ENCODE measurements at regions of chr3 and their contacts with region 1.

Region 1: GRCh38 chr3:197186887-197187588 is 111.4 kb downstream of the DLG1 start:
- DNase-seq: no peak
- H3K4me3 ChIP-seq: no peak overlapping the region
- CTCF ChIP-seq: peak; percentile 65

Region 2: DNA sequence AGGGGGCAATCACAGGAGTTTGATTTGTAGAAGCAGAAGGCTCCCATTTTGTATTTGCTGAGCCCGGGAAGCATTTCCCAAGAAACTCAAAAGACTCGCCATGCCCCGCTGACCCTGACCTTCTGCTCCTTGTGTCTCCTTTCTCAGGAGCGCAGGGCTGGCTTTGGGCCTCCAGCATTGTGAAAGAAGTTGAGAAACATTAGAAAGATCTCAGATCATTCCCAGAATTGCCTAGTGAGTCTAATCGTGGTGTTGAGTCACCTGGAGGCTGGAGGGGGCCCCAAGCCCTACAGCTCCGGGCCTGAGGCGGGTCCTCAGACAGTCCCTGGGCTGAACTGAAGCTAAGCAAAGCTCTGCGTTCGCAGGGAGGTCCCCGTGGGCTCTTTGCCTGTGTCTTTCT is 207.5 kb before region 1 on chr3:
- CTCF ChIA-PET with region 1: interaction called, 16 read pairs
- POLR2A ChIA-PET with region 1: no interaction called
- DNase-seq: peak; percentile 17
- H3K4me3 ChIP-seq: no peak overlapping the region
- CTCF ChIP-seq: no peak

Region 3: GRCh38 chr3:197002701-197003454 is 184.2 kb before region 1 on chr3:
- CTCF ChIA-PET with region 1: interaction called, 13 read pairs
- POLR2A ChIA-PET with region 1: no interaction called
- DNase-seq: no peak
- H3K4me3 ChIP-seq: peak overlapping the region; percentile 62
- CTCF ChIP-seq: peak; percentile 82

Region 4: GRCh38 chr3:197168606-197169005 is 18.4 kb before region 1 on chr3:
- CTCF ChIA-PET with region 1: interaction called, 16 read pairs
- POLR2A ChIA-PET with region 1: no interaction called
- DNase-seq: no peak
- H3K4me3 ChIP-seq: no peak overlapping the region
- CTCF ChIP-seq: no peak

Region 5: DNA sequence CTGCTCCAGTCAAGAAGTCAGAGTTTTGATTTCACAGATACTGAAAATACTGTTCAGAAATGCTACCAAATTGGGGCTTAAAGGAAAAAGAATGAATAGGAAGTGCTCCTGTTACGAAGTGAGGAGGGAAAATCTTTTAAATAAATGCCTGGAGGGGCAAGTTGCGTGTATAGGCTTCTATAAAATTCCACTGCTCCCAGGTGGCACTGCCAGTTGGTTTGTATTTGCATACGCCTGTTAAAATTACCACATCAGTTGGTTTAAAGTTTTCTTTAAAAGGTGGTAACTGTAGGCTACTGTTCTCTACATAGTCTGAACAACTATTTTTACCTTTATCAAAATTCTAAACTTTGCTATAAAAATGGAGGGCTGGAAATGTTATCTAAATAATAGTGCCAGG is 12.1 kb before region 1 on chr3:
- CTCF ChIA-PET with region 1: interaction called, 16 read pairs
- POLR2A ChIA-PET with region 1: no interaction called
- DNase-seq: no peak
- H3K4me3 ChIP-seq: no peak overlapping the region
- CTCF ChIP-seq: no peak

Measured in AG04449 (cell line).